Stomach (tissue), 19 donors: ENCODE measurements at regions of chr11 and their contacts with region 1.

Region 1: DNA sequence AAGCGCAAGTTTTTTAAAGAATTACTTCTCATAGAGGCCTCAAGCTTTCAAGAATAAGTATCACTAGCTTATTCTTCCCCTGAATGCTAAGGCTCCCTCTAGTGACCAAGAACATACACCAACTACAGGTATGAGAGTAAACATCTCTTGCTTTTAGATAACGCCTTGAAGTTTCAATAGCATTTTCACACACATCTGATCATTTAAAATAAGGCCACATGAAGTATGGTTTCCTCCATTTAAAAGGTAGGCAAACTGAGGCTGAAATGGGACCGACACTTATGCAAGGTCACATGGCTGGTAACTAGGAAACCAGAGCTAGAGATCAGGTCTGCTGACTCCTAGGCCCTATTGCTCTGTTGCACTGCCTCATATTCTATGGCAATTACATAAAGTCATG is 66.5 kb downstream of the CCDC34 start:
- DNase-seq: peak in 1 of 2 donors; percentile 76
- H3K4me3 ChIP-seq: no peak overlapping the region
- H3K27ac ChIP-seq: no peak overlapping the region
- H3K4me1 ChIP-seq: peaks cover 0 to 6% (median 0%) of the 10 kb centered on the region in 4 donors
- H3K27me3 ChIP-seq: no peaks in the 10 kb centered on the region
- CTCF ChIP-seq: peak in 5 of 7 experiments; percentile 25 to 61 (median 53)
- EP300 ChIP-seq: no peak
- POLR2A ChIP-seq: no peak

Region 2: GRCh38 chr11:27129686-27130085 is 166.8 kb before region 1 on chr11:
- intact Hi-C with region 1: no loop called
- DNase-seq: peak in 1 of 2 donors; percentile 43
- H3K4me3 ChIP-seq: no peak overlapping the region
- H3K27ac ChIP-seq: no peak overlapping the region
- H3K4me1 ChIP-seq: no peaks in the 10 kb centered on the region
- H3K27me3 ChIP-seq: no peaks in the 10 kb centered on the region
- CTCF ChIP-seq: no peak
- EP300 ChIP-seq: no peak
- POLR2A ChIP-seq: no peak

Region 3: DNA sequence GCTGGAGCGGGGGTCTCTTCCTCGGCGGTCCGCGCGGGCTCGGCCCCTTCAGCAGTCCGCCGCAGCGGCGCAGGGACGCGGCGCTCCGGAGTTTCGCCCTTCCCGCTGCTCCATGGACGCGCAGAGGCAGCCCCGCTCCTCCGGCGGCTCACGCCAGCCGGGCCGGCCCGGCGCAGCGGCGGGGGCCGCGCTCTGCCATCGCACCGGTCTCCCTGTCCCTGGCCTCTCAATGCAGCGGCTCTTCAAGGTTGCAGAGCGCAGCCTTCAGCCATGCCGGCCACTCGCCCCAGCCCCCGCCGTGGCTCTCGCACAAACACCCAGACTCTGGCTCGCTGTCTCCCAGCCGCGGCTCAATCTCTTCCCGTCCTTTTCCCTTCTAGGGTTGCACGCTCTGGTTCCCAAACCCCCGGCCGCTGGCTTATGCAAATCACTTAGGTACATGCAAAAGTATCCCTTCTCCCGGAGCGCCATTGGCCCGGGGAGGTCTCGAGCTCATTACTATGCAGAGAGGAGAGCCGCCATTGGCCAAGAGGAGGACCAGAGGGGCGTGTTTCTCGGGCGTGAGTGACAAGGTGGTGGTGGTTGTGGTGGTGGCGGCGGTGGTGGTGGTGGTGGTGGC is 176.0 kb after region 1 on chr11 and contains the start of gene LGR4:
- intact Hi-C with region 1: loop called (anchors 10 kb)
- DNase-seq: peak; percentile 95 to 97
- H3K4me3 ChIP-seq: peak within 1 kb of the TSS; percentile 90 to 96 (median 91)
- H3K27ac ChIP-seq: peak within 1 kb of the TSS; percentile 86 to 96 (median 92)
- H3K4me1 ChIP-seq: peaks cover 9 to 47% (median 29%) of the 10 kb centered on the region in 4 donors
- H3K27me3 ChIP-seq: no peaks in the 10 kb centered on the region
- CTCF ChIP-seq: no peak
- EP300 ChIP-seq: no peak
- POLR2A ChIP-seq: peak in 2 of 4 donors; percentile 65 to 71
- total RNA-seq, gene LGR4: 29.2 to 236 (median 57.9) TPM